Activated CD4-positive, alpha-beta T cell treated with anti-CD3 and anti-CD28 coated beads for 36 hours (primary cell): ENCODE measurements at regions of chr1 and their contacts with region 1.

Region 1: DNA sequence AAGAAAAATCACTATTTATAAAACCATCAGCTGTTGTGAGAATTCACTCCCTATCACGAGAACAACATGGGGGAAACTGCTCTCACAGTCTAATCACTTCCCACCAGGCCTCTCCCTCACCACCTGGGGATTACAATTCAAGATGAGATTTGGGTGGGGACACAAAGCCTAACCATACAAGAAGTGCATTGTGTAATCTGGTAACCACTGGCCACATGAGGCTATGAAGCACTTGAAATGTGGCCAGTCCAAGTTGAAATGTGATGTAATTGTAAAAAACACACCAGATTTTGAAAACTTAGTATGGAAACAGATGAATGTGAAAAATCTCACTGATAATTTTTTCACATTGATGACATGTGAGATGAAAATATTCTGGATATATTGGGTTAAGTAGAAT is 293.8 kb downstream of the TTLL7 start:
- DNase-seq: no peak
- ATAC-seq: no peak
- H3K4me3 Mint-ChIP-seq: no peak overlapping the region
- H3K27ac Mint-ChIP-seq: no peak overlapping the region
- H3K4me1 Mint-ChIP-seq: peaks cover 33% of the 10 kb centered on the region
- H3K27me3 Mint-ChIP-seq: no peaks in the 10 kb centered on the region

Region 2: DNA sequence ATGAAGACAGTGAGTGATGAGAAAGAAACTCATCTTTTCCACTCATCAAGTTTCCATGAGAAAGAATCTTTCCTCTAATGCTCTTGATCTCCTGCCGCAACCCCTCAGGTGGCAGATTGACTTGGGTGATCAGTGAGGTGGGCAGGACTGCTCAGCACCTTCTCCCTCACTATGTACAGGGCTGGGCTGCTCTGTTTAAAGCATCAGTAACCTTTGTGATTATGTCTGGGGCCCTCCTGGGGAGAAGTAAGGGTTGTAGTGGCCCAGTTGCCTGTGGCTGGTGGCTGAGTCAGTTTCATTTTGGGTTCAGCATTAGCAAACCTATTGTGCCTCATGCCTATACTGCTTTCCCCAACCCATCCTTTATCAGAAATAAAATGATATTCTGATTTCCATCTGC is 72.2 kb before region 1 on chr1:
- CTCF ChIA-PET with region 1: no interaction called
- POLR2A ChIA-PET with region 1: no interaction called
- intact Hi-C with region 1: loop called in 1 of 2 experiments (anchors 5 kb)
- DNase-seq: peak; percentile 48
- ATAC-seq: peak; percentile 97
- H3K4me3 Mint-ChIP-seq: no peak overlapping the region
- H3K27ac Mint-ChIP-seq: peak overlapping the region; percentile 63
- H3K4me1 Mint-ChIP-seq: peaks cover 10% of the 10 kb centered on the region
- H3K27me3 Mint-ChIP-seq: no peaks in the 10 kb centered on the region

Region 3: GRCh38 chr1:85001742-85002141 is 1296.7 kb after region 1 on chr1:
- CTCF ChIA-PET with region 1: no interaction called
- POLR2A ChIA-PET with region 1: no interaction called
- intact Hi-C with region 1: no loop called
- DNase-seq: no peak
- ATAC-seq: no peak
- H3K4me3 Mint-ChIP-seq: no peak overlapping the region
- H3K27ac Mint-ChIP-seq: no peak overlapping the region
- H3K4me1 Mint-ChIP-seq: peaks cover 25% of the 10 kb centered on the region
- H3K27me3 Mint-ChIP-seq: peaks cover 24% of the 10 kb centered on the region